ENCODE measurements at regions of chr7 and their contacts with region 1.

Region 1: GRCh38 chr7:121872831-121873288 is at the start of gene PTPRZ1:
- DNase-seq: no peak
- H3K4me3 ChIP-seq: peak within 1 kb of the TSS; percentile 86 to 98 (median 89)
- H3K27ac ChIP-seq: peak within 1 kb of the TSS; percentile 49
- H3K4me1 ChIP-seq: peaks cover 8% of the 10 kb centered on the region
- H3K27me3 ChIP-seq: no peaks in the 10 kb centered on the region
- CTCF ChIP-seq: no peak
- total RNA-seq, gene PTPRZ1: 6.2 to 46.1 TPM

Region 2: GRCh38 chr7:121605317-121605680 is 267.6 kb before region 1 on chr7:
- CTCF ChIA-PET with region 1: no interaction called
- dilution Hi-C with region 1: no loop called
- in situ Hi-C with region 1: no loop called
- intact Hi-C with region 1: loop called (anchors 1 kb)
- DNase-seq: peak; percentile 46
- H3K4me3 ChIP-seq: no peak overlapping the region
- H3K27ac ChIP-seq: no peak overlapping the region
- H3K4me1 ChIP-seq: peaks cover 12% of the 10 kb centered on the region
- H3K27me3 ChIP-seq: no peaks in the 10 kb centered on the region
- CTCF ChIP-seq: peak; percentile 32 to 68

Region 3: DNA sequence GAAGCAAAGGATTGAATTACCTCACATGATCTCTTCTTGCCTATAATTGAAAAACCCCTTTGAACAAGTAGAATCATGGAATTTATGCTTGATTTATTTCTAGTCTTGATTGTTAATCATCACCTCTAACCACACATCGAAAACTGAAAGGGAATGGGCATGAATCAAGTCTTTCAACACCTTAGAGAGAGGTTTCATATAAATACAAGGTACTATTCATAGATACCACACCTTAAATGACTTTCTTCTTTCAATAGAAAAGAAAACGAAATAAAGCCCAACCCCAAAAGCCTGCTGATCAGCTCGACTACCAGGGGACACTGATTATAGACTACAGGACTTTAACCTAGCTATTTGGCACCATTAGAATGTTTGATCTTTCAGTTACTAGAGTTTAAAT is 128.5 kb before region 1 on chr7:
- CTCF ChIA-PET with region 1: no interaction called
- dilution Hi-C with region 1: no loop called
- in situ Hi-C with region 1: no loop called
- intact Hi-C with region 1: loop called (anchors 2 kb)
- DNase-seq: peak; percentile 91
- H3K4me3 ChIP-seq: no peak overlapping the region
- H3K27ac ChIP-seq: peak overlapping the region; percentile 94
- H3K4me1 ChIP-seq: peaks cover 44% of the 10 kb centered on the region
- H3K27me3 ChIP-seq: no peaks in the 10 kb centered on the region
- CTCF ChIP-seq: no peak

Region 4: DNA sequence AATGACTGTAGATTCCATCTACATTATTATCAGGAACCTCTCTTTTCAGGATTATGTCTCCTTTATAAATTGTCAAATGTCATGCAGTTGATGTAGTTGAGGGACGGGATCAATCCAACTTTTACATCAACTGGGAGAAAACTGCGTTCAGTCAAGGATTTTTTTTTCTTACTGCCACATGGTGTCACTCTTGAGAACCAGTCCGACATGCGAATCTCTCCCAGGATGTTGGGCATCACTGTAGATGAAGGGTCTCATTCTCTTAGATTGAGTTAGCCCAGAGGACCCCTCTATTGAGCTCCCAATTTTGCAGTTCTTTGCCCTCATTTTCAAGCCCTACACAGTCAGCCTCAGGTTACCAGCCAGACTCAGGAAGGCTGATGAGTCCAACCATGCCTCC is 120.2 kb before region 1 on chr7:
- CTCF ChIA-PET with region 1: no interaction called
- dilution Hi-C with region 1: no loop called
- in situ Hi-C with region 1: no loop called
- intact Hi-C with region 1: loop called (anchors 1 kb)
- DNase-seq: no peak
- H3K4me3 ChIP-seq: no peak overlapping the region
- H3K27ac ChIP-seq: no peak overlapping the region
- H3K4me1 ChIP-seq: peaks cover 3% of the 10 kb centered on the region
- H3K27me3 ChIP-seq: no peaks in the 10 kb centered on the region
- CTCF ChIP-seq: peak in 1 of 2 donors; percentile 49

Region 5: GRCh38 chr7:121797657-121798452 is 75.0 kb before region 1 on chr7:
- CTCF ChIA-PET with region 1: no interaction called
- dilution Hi-C with region 1: no loop called
- in situ Hi-C with region 1: no loop called
- intact Hi-C with region 1: loop called (anchors 1 kb)
- DNase-seq: peak; percentile 86
- H3K4me3 ChIP-seq: peak overlapping the region in 1 of 3 experiments; percentile 6
- H3K27ac ChIP-seq: peak overlapping the region; percentile 96
- H3K4me1 ChIP-seq: peaks cover 64% of the 10 kb centered on the region
- H3K27me3 ChIP-seq: no peaks in the 10 kb centered on the region
- CTCF ChIP-seq: no peak

Region 6: GRCh38 chr7:121824276-121824675 is 48.6 kb before region 1 on chr7:
- CTCF ChIA-PET with region 1: interaction called, 20 read pairs
- dilution Hi-C with region 1: no loop called
- in situ Hi-C with region 1: no loop called
- intact Hi-C with region 1: no loop called
- DNase-seq: peak; percentile 17
- H3K4me3 ChIP-seq: no peak overlapping the region
- H3K27ac ChIP-seq: no peak overlapping the region
- H3K4me1 ChIP-seq: no peaks in the 10 kb centered on the region
- H3K27me3 ChIP-seq: no peaks in the 10 kb centered on the region
- CTCF ChIP-seq: no peak

Region 7: DNA sequence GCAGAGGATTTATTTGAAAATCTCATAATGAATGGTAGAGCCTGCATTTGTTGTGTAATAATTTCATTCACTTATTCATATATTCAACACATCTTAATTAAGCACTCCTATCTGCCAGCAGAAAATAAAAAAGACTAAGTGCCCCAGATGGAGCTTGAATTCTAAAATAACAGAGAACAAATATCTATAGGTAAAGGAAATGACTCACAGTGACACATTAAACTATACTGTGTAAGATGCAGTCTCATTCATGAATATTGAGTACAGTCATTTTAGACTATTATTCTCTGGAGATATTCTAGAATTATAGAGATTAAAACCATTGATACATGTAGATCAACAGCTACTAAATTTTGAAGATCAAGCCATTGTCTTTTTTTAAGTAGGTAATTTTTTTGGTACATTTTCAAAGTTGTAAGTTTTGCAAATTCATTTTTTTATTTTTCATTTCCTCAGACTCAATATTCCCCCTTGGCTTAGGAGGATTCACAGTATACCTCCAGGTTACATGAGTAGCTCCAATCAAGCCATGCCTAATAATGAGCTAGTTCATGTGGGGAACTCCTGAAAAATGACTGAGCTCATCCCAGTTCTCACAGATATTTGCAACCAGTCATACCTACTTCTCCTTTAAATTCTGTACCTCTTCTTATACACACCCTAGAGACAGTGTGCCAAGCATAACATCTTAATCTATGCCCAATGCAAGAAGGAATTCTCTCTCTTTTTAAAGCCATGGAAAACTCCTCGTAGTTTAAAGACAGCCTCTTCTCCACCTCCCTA is 72.4 kb after region 1 on chr7:
- CTCF ChIA-PET with region 1: interaction called, 5 read pairs
- dilution Hi-C with region 1: no loop called
- in situ Hi-C with region 1: no loop called
- intact Hi-C with region 1: loop called (anchors 5 kb)
- DNase-seq: peak; percentile 80
- H3K4me3 ChIP-seq: no peak overlapping the region
- H3K27ac ChIP-seq: peak overlapping the region; percentile 69
- H3K4me1 ChIP-seq: peaks cover 25% of the 10 kb centered on the region
- H3K27me3 ChIP-seq: no peaks in the 10 kb centered on the region
- CTCF ChIP-seq: no peak